CD8-positive, alpha-beta T cell (primary cell): ENCODE measurements at regions of chr3 and their contacts with region 1.

Region 1: GRCh38 chr3:195271116-195271858 is at the start of gene XXYLT1:
- DNase-seq: peak; percentile 77 to 94 (median 89)
- ATAC-seq: peak; percentile 87
- H3K4me3 ChIP-seq: peak within 1 kb of the TSS; percentile 87
- H3K4me3 Mint-ChIP-seq: peak within 1 kb of the TSS; percentile 86
- H3K27ac ChIP-seq: peak within 1 kb of the TSS; percentile 43 to 59
- H3K27ac Mint-ChIP-seq: peak within 1 kb of the TSS; percentile 69
- H3K4me1 ChIP-seq: peaks cover 21% of the 10 kb centered on the region
- H3K4me1 Mint-ChIP-seq: peaks cover 23% of the 10 kb centered on the region
- H3K27me3 ChIP-seq: no peaks in the 10 kb centered on the region
- H3K27me3 Mint-ChIP-seq: no peaks in the 10 kb centered on the region
- CTCF ChIP-seq: peak; percentile 77
- total RNA-seq, gene XXYLT1: 3.7 to 4.3 TPM

Region 2: DNA sequence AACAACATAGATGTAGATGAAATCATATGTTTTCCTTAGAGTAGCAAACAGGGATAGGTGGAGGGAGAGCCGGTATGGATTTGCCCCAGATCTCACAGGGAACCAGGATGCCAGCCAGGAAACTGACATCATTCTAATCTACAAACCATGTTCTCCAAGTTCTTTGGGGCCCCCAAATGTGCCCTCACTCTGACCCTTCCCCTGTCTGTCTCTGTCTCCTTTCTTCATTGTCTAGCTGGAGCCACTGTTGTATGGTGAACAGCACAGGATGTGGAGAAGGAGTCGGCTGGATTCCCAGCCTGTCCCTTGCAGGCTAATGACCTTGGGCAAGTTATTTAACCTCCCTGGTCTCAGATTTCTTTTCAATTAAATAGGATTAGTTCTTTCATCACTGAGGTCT is 1893.7 kb before region 1 on chr3:
- CTCF ChIA-PET with region 1: no interaction called
- POLR2A ChIA-PET with region 1: no interaction called
- intact Hi-C with region 1: no loop called
- DNase-seq: no peak
- ATAC-seq: no peak
- H3K4me3 ChIP-seq: no peak overlapping the region
- H3K4me3 Mint-ChIP-seq: no peak overlapping the region
- H3K27ac ChIP-seq: no peak overlapping the region
- H3K27ac Mint-ChIP-seq: no peak overlapping the region
- H3K4me1 ChIP-seq: no peaks in the 10 kb centered on the region
- H3K4me1 Mint-ChIP-seq: no peaks in the 10 kb centered on the region
- H3K27me3 ChIP-seq: no peaks in the 10 kb centered on the region
- H3K27me3 Mint-ChIP-seq: peaks cover 12% of the 10 kb centered on the region
- CTCF ChIP-seq: no peak

Region 3: GRCh38 chr3:194486540-194487288 is 784.6 kb before region 1 on chr3 and contains the start of gene ATP13A3:
- CTCF ChIA-PET with region 1: no interaction called
- POLR2A ChIA-PET with region 1: no interaction called
- intact Hi-C with region 1: loop called (anchors 2 to 5 kb)
- DNase-seq: peak; percentile 83 to 96 (median 90)
- ATAC-seq: peak; percentile 80
- H3K4me3 ChIP-seq: peak within 1 kb of the TSS; percentile 74 to 98
- H3K4me3 Mint-ChIP-seq: peak within 1 kb of the TSS; percentile 93
- H3K27ac ChIP-seq: peak within 1 kb of the TSS; percentile 58 to 85
- H3K27ac Mint-ChIP-seq: peak within 1 kb of the TSS; percentile 92
- H3K4me1 ChIP-seq: peaks cover 29% of the 10 kb centered on the region
- H3K4me1 Mint-ChIP-seq: peaks cover 43% of the 10 kb centered on the region
- H3K27me3 ChIP-seq: no peaks in the 10 kb centered on the region
- H3K27me3 Mint-ChIP-seq: no peaks in the 10 kb centered on the region
- CTCF ChIP-seq: no peak
- total RNA-seq, gene ATP13A3: 50.2 to 52.8 TPM

Region 4: DNA sequence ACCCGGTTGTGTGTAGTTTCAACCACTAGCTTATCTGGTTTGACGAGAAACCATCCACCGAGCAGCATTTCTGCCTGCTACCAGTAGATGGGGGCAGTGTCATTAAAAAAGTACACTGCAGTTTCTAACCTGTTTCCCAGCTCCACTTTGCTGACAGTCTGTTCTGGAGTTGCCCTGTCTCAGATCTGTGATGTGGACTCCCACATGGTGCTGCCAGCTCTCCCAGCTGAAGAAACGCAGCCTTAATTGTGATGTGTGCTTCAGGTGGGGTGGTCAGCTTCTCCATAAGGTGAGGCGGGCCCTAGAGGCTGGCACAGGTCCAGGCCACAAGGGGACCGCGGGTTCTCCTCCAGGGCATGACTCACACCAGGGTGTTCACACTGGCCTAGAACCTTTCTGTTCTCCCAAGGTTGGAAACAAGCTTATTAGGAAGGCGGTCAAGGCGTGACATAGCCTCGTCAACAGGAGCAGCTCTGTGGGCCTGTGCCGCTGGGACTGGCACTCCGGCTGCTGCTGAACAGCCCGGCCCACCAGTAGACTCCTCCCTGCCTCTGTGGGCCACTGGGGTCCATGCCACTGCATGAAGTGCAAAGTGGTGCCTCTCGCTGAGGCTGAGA is 588.5 kb before region 1 on chr3:
- CTCF ChIA-PET with region 1: interaction called, 25 read pairs
- POLR2A ChIA-PET with region 1: interaction called, 19 read pairs
- intact Hi-C with region 1: no loop called
- DNase-seq: peak in 8 of 9 experiments; percentile 53 to 85 (median 70)
- ATAC-seq: peak; percentile 73
- H3K4me3 ChIP-seq: no peak overlapping the region
- H3K4me3 Mint-ChIP-seq: no peak overlapping the region
- H3K27ac ChIP-seq: no peak overlapping the region
- H3K27ac Mint-ChIP-seq: no peak overlapping the region
- H3K4me1 ChIP-seq: peaks cover 31% of the 10 kb centered on the region
- H3K4me1 Mint-ChIP-seq: peaks cover 36% of the 10 kb centered on the region
- H3K27me3 ChIP-seq: no peaks in the 10 kb centered on the region
- H3K27me3 Mint-ChIP-seq: peaks cover 10% of the 10 kb centered on the region
- CTCF ChIP-seq: peak; percentile 72

Region 5: DNA sequence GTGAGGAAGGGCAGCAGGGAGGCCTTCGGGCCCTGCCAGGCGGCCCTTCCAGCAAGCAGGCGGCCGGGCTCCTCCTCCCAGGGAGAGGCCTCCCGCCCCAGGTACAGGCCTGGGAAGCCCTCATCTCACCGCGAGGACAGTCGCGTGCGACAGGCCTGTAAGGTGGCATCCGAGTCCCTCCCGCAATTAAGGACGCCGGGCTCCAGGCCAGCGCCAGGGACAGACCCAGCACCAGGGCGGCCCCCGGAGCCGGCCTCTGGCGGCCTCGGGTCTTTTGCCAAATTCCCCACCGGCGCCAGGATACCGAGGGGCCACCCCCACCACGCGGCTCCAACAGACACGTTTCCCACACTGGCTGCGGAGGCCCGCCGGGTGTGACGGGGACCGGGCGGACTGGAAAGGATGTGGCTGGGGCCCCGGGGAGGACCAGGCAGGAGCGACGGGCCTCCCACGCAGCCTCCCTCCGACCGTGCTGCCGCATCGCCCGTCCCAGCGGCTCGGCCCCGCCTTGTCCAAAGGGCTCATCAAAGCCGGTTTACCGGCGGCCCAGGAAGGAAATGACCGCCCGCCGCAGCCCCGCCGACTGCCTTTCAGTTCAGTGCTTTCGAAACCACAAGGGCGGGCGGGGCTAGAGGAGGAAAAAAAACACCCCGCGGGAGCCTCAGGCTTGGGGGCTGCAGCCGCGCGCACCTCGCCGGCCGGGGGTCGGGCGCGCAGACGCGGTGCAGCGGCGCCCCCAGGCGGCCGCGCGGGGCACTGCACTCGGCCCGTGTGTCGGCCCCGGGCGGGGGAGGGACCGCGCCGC is 11.6 kb before region 1 on chr3:
- CTCF ChIA-PET with region 1: interaction called, 40 read pairs
- POLR2A ChIA-PET with region 1: interaction called, 18 read pairs
- intact Hi-C with region 1: loop called in 1 of 2 experiments (anchors 1 kb)
- DNase-seq: peak; percentile 82 to 95 (median 93)
- ATAC-seq: peak; percentile 91
- H3K4me3 ChIP-seq: peak overlapping the region; percentile 74 to 86
- H3K4me3 Mint-ChIP-seq: peak overlapping the region; percentile 72
- H3K27ac ChIP-seq: peak overlapping the region; percentile 60 to 86
- H3K27ac Mint-ChIP-seq: peak overlapping the region; percentile 87
- H3K4me1 ChIP-seq: peaks cover 32% of the 10 kb centered on the region
- H3K4me1 Mint-ChIP-seq: peaks cover 18% of the 10 kb centered on the region
- H3K27me3 ChIP-seq: no peaks in the 10 kb centered on the region
- H3K27me3 Mint-ChIP-seq: no peaks in the 10 kb centered on the region
- CTCF ChIP-seq: peak; percentile 71

Region 6: GRCh38 chr3:195467641-195468390 is 196.5 kb after region 1 on chr3:
- CTCF ChIA-PET with region 1: no interaction called
- POLR2A ChIA-PET with region 1: no interaction called
- intact Hi-C with region 1: no loop called
- DNase-seq: peak in 1 of 9 experiments; percentile 49
- ATAC-seq: peak; percentile 79
- H3K4me3 ChIP-seq: no peak overlapping the region
- H3K4me3 Mint-ChIP-seq: no peak overlapping the region
- H3K27ac ChIP-seq: no peak overlapping the region
- H3K27ac Mint-ChIP-seq: peak overlapping the region; percentile 86
- H3K4me1 ChIP-seq: no peaks in the 10 kb centered on the region
- H3K4me1 Mint-ChIP-seq: peaks cover 8% of the 10 kb centered on the region
- H3K27me3 ChIP-seq: no peaks in the 10 kb centered on the region
- H3K27me3 Mint-ChIP-seq: no peaks in the 10 kb centered on the region
- CTCF ChIP-seq: no peak

Region 7: DNA sequence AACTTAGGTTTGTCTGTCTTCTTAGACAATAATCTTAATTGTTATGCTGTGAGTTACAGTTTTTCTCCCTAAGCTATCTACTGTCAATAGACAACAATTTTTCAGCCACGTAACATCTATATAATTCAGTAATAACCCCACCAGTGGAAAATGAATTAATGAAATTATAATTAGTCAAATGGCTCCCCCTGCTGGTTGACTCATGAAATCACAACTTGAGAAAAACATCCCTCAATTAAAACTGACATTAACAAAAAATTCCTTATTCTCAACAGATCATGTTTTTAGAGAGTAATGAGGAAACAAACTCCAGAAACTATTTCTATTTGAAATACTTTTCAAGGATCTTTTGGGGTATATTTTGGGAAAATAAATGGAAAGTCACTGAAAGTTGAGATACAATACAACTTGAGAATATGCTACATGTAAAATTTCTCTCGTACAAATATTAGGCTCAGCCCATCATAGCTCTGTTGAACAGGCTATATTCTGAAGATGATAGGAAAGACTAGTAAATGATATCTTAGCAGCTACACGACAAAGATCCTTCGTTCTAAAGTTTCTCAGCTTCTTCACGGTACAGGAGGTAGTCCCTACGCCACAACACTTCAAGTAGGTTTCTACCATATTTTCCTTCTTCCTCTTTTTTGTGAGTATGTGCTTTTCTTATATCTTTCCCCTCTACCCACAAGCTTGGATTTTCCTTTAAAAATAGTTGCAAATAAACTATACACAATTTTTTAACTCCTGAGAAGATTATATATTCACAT is 251.2 kb after region 1 on chr3:
- CTCF ChIA-PET with region 1: interaction called, 44 read pairs
- POLR2A ChIA-PET with region 1: interaction called, 20 read pairs
- intact Hi-C with region 1: loop called (anchors 1 kb)
- DNase-seq: peak in 3 of 9 experiments; percentile 52 to 65 (median 56)
- ATAC-seq: peak; percentile 30
- H3K4me3 ChIP-seq: no peak overlapping the region
- H3K4me3 Mint-ChIP-seq: no peak overlapping the region
- H3K27ac ChIP-seq: no peak overlapping the region
- H3K27ac Mint-ChIP-seq: peak overlapping the region; percentile 75
- H3K4me1 ChIP-seq: peaks cover 35% of the 10 kb centered on the region
- H3K4me1 Mint-ChIP-seq: peaks cover 46% of the 10 kb centered on the region
- H3K27me3 ChIP-seq: no peaks in the 10 kb centered on the region
- H3K27me3 Mint-ChIP-seq: no peaks in the 10 kb centered on the region
- CTCF ChIP-seq: peak; percentile 93

Region 8: GRCh38 chr3:195542698-195543499 is 271.6 kb after region 1 on chr3 and contains the start of gene PPP1R2:
- CTCF ChIA-PET with region 1: interaction called, 18 read pairs
- POLR2A ChIA-PET with region 1: interaction called, 22 read pairs
- intact Hi-C with region 1: loop called in 1 of 2 experiments (anchors 1 kb)
- DNase-seq: peak; percentile 65 to 96 (median 93)
- ATAC-seq: peak; percentile 86
- H3K4me3 ChIP-seq: peak within 1 kb of the TSS; percentile 90 to 91
- H3K4me3 Mint-ChIP-seq: peak within 1 kb of the TSS; percentile 93
- H3K27ac ChIP-seq: peak within 1 kb of the TSS; percentile 92 to 98
- H3K27ac Mint-ChIP-seq: peak within 1 kb of the TSS; percentile 97
- H3K4me1 ChIP-seq: peaks cover 67% of the 10 kb centered on the region
- H3K4me1 Mint-ChIP-seq: peaks cover 75% of the 10 kb centered on the region
- H3K27me3 ChIP-seq: no peaks in the 10 kb centered on the region
- H3K27me3 Mint-ChIP-seq: no peaks in the 10 kb centered on the region
- CTCF ChIP-seq: no peak
- total RNA-seq, gene PPP1R2: 160 to 166 TPM

Region 9: GRCh38 chr3:195850857-195851543 is 579.7 kb after region 1 on chr3:
- CTCF ChIA-PET with region 1: no interaction called
- POLR2A ChIA-PET with region 1: no interaction called
- intact Hi-C with region 1: loop called (anchors 2 to 5 kb)
- DNase-seq: peak; percentile 76 to 93 (median 88)
- ATAC-seq: peak; percentile 100
- H3K4me3 ChIP-seq: no peak overlapping the region
- H3K4me3 Mint-ChIP-seq: peak overlapping the region; percentile 16
- H3K27ac ChIP-seq: no peak overlapping the region
- H3K27ac Mint-ChIP-seq: no peak overlapping the region
- H3K4me1 ChIP-seq: no peaks in the 10 kb centered on the region
- H3K4me1 Mint-ChIP-seq: peaks cover 7% of the 10 kb centered on the region
- H3K27me3 ChIP-seq: no peaks in the 10 kb centered on the region
- H3K27me3 Mint-ChIP-seq: no peaks in the 10 kb centered on the region
- CTCF ChIP-seq: peak; percentile 100